ENCODE measurements at regions of chr2 and their contacts with region 1.

Region 1: GRCh38 chr2:172465417-172466334 is 38.3 kb downstream of the ITGA6 start:
- DNase-seq: peak; percentile 75 to 80 (median 77)
- H3K4me3 ChIP-seq: peak overlapping the region in 1 of 2 donors; percentile 1
- H3K4me3 Mint-ChIP-seq: peak overlapping the region in 7 of 8 donors; percentile 36 to 94 (median 72)
- H3K27ac ChIP-seq: peak overlapping the region; percentile 50
- H3K27ac Mint-ChIP-seq: peak overlapping the region; percentile 63 to 97 (median 90)
- H3K4me1 ChIP-seq: peaks cover 54% of the 10 kb centered on the region
- H3K4me1 Mint-ChIP-seq: peaks cover 45 to 63% (median 52%) of the 10 kb centered on the region in 4 donors
- H3K27me3 ChIP-seq: no peaks in the 10 kb centered on the region
- H3K27me3 Mint-ChIP-seq: no peaks in the 10 kb centered on the region

Region 2: DNA sequence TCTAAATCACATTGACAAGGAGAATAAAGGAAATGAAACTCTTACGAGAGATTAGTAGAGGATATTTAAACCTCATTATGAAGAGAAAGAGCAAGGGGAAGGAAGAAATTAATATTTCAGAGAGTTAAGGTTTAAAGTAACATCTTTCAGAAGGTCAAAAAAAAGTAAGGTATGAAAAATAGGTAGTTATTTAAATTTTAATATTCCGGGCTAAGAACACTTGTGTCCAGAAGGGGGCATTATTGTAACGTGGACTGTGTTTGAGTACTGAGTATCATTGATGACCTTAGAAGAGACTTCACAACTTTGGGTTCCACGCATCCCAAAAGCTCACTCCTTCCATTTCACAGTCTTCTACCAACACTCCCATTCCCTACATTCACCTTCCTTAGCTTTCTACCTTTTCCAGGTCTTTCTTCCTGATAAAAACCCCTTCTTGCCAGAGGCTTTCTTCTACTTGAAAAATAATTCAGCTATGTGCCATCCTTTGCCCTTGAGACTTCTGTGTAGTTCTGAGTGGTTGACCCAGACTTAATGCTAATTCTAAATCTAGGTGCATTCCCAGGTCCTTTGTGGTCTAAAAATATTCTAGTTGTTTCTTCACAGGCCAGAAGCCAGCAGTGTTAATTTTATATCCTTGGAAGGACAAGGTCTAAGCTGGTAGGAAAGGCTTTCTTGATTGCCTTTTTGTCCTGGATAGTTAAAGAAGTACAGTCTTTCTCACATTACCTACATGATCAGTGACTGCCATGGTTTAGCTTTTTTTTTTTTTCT is 761.9 kb before region 1 on chr2:
- CTCF ChIA-PET with region 1: interaction called, 12 read pairs
- POLR2A ChIA-PET with region 1: interaction called, 3 read pairs
- intact Hi-C with region 1: loop called (anchors 1 kb)
- DNase-seq: peak in 4 of 5 donors; percentile 19 to 33 (median 20)
- H3K4me3 ChIP-seq: no peak overlapping the region
- H3K4me3 Mint-ChIP-seq: no peak overlapping the region
- H3K27ac ChIP-seq: no peak overlapping the region
- H3K27ac Mint-ChIP-seq: peak overlapping the region in 6 of 7 donors; percentile 27 to 86 (median 75)
- H3K4me1 ChIP-seq: no peaks in the 10 kb centered on the region
- H3K4me1 Mint-ChIP-seq: peaks cover 6 to 12% (median 8%) of the 10 kb centered on the region in 4 donors
- H3K27me3 ChIP-seq: no peaks in the 10 kb centered on the region
- H3K27me3 Mint-ChIP-seq: no peaks in the 10 kb centered on the region

Region 3: GRCh38 chr2:172131713-172132555 is 333.7 kb before region 1 on chr2:
- CTCF ChIA-PET with region 1: interaction called, 15 read pairs
- POLR2A ChIA-PET with region 1: no interaction called
- intact Hi-C with region 1: loop called (anchors 1 kb)
- DNase-seq: no peak
- H3K4me3 ChIP-seq: no peak overlapping the region
- H3K4me3 Mint-ChIP-seq: no peak overlapping the region
- H3K27ac ChIP-seq: no peak overlapping the region
- H3K27ac Mint-ChIP-seq: no peak overlapping the region
- H3K4me1 ChIP-seq: no peaks in the 10 kb centered on the region
- H3K4me1 Mint-ChIP-seq: no peaks in the 10 kb centered on the region
- H3K27me3 ChIP-seq: no peaks in the 10 kb centered on the region
- H3K27me3 Mint-ChIP-seq: peaks cover 4 to 12% of the 10 kb centered on the region in 2 donors

Region 4: DNA sequence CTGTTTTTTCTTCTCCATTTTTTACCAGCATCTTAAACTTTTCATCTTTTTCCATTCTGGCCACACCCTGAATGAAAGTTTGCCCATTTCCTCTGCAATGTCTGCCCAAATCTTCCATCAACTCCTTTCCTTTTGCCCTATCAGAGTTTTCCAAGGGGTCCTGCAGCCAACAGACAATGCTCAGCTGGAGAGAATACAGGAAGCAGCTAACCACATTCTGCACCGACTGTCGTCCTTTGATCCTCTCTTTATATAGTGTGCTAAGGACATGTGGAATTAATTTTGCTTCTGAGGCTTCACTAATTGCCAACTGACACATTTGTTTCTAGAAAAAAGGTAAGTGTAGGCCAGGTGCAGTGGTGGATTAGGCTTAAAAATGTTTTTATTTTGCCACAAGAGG is 312.5 kb before region 1 on chr2:
- CTCF ChIA-PET with region 1: no interaction called
- POLR2A ChIA-PET with region 1: no interaction called
- intact Hi-C with region 1: no loop called
- DNase-seq: peak in 1 of 5 donors; percentile 7
- H3K4me3 ChIP-seq: no peak overlapping the region
- H3K4me3 Mint-ChIP-seq: peak overlapping the region in 1 of 8 donors; percentile 17
- H3K27ac ChIP-seq: no peak overlapping the region
- H3K27ac Mint-ChIP-seq: no peak overlapping the region
- H3K4me1 ChIP-seq: peaks cover 8% of the 10 kb centered on the region
- H3K4me1 Mint-ChIP-seq: peaks cover 3 to 9% (median 6%) of the 10 kb centered on the region in 4 donors
- H3K27me3 ChIP-seq: no peaks in the 10 kb centered on the region
- H3K27me3 Mint-ChIP-seq: peaks cover 20 to 42% of the 10 kb centered on the region in 2 donors

Region 5: DNA sequence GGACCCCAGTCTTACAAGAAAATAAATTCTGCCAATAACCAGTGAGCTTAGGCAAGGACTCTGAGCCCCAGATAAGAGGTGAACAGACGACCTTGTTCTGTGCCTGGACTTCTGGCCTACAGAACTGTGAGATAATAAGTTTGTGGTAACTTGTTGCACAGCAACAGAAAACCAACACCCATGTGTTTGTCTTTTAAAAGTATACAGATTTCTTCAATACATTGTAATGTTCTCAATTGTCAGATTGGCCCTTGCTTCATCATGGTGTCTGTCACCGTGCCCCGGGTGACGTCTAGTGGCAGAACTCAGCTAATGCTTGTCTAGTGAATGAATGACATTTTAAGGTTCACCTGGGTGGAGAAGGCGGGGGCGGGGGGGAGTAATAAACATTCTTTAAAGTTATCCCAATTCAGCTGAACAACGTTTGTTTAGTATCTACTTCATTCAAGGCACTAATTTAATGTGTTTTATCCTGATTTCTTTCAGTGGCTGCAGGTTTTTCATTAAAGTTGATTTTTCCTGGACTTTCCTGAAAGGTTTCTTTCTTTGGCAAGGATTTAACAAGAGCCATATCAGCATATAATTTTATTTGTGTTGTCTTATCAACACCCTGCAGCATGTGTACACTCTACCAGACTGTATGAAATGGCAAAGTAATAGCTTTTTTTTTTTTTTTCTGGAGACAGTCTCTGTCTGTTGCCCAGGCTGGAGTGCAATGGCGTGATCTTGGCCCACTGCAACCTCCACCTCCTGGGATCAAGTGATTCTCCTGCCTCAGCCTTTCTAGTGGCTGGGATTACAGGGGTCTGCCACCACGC is 239.2 kb before region 1 on chr2:
- CTCF ChIA-PET with region 1: interaction called, 40 read pairs
- POLR2A ChIA-PET with region 1: interaction called, 3 read pairs
- intact Hi-C with region 1: no loop called
- DNase-seq: peak in 4 of 5 donors; percentile 21 to 49 (median 34)
- H3K4me3 ChIP-seq: no peak overlapping the region
- H3K4me3 Mint-ChIP-seq: peak overlapping the region in 1 of 8 donors; percentile 34
- H3K27ac ChIP-seq: no peak overlapping the region
- H3K27ac Mint-ChIP-seq: peak overlapping the region in 3 of 7 donors; percentile 17 to 85 (median 62)
- H3K4me1 ChIP-seq: peaks cover 57% of the 10 kb centered on the region
- H3K4me1 Mint-ChIP-seq: peaks cover 31 to 64% (median 44%) of the 10 kb centered on the region in 4 donors
- H3K27me3 ChIP-seq: no peaks in the 10 kb centered on the region
- H3K27me3 Mint-ChIP-seq: peaks cover 0 to 1% of the 10 kb centered on the region in 2 donors

Region 6: DNA sequence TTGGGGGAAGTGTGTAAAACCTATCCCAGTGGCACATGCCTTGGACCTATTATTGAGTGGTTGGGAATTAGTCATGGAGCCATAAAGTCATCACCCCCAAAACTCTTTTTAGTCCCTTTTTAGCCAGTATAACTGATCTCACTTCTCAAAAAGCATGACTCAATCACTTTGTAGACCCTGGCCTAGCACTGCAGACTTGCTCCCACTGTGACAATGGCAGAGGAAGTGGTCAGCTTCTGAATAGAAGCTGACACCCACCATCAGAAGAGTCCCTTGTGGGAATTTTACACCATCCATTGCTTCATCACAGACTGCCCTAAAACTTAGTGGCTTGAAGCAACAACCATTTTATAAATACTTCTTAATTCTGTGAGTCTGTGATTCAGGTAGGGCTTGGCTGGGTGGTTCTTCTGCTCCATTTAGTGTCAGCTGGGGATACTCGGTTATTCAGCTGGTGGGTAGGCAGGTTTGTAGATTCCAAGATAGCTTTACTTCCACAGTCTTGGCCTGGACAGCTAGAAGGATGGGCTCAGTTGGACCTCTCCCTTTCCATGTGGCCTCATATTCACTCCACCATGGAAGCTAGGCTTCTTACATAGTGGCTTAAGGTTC is 49.1 kb before region 1 on chr2:
- CTCF ChIA-PET with region 1: interaction called, 1,033 read pairs
- POLR2A ChIA-PET with region 1: interaction called, 449 read pairs
- intact Hi-C with region 1: no loop called
- DNase-seq: no peak
- H3K4me3 ChIP-seq: no peak overlapping the region
- H3K4me3 Mint-ChIP-seq: no peak overlapping the region
- H3K27ac ChIP-seq: no peak overlapping the region
- H3K27ac Mint-ChIP-seq: no peak overlapping the region
- H3K4me1 ChIP-seq: no peaks in the 10 kb centered on the region
- H3K4me1 Mint-ChIP-seq: peaks cover 0 to 1% (median 0%) of the 10 kb centered on the region in 4 donors
- H3K27me3 ChIP-seq: no peaks in the 10 kb centered on the region
- H3K27me3 Mint-ChIP-seq: peaks cover 2 to 5% of the 10 kb centered on the region in 2 donors

Region 7: GRCh38 chr2:172555522-172556283 is 90.0 kb after region 1 on chr2 and contains the start of gene PDK1:
- CTCF ChIA-PET with region 1: interaction called, 3 read pairs
- POLR2A ChIA-PET with region 1: interaction called, 19 read pairs
- intact Hi-C with region 1: no loop called
- DNase-seq: peak; percentile 90 to 94 (median 93)
- H3K4me3 ChIP-seq: peak within 1 kb of the TSS; percentile 62 to 82
- H3K4me3 Mint-ChIP-seq: peak within 1 kb of the TSS; percentile 90 to 97 (median 94)
- H3K27ac ChIP-seq: peak within 1 kb of the TSS; percentile 82
- H3K27ac Mint-ChIP-seq: peak within 1 kb of the TSS; percentile 78 to 96 (median 93)
- H3K4me1 ChIP-seq: peaks cover 31% of the 10 kb centered on the region
- H3K4me1 Mint-ChIP-seq: peaks cover 22 to 51% (median 38%) of the 10 kb centered on the region in 4 donors
- H3K27me3 ChIP-seq: no peaks in the 10 kb centered on the region
- H3K27me3 Mint-ChIP-seq: peaks cover 0 to 1% of the 10 kb centered on the region in 2 donors
- total RNA-seq, gene PDK1: 34.2 to 36.8 TPM